ENCODE measurements at regions of chr13 and their contacts with region 1.

Region 1: DNA sequence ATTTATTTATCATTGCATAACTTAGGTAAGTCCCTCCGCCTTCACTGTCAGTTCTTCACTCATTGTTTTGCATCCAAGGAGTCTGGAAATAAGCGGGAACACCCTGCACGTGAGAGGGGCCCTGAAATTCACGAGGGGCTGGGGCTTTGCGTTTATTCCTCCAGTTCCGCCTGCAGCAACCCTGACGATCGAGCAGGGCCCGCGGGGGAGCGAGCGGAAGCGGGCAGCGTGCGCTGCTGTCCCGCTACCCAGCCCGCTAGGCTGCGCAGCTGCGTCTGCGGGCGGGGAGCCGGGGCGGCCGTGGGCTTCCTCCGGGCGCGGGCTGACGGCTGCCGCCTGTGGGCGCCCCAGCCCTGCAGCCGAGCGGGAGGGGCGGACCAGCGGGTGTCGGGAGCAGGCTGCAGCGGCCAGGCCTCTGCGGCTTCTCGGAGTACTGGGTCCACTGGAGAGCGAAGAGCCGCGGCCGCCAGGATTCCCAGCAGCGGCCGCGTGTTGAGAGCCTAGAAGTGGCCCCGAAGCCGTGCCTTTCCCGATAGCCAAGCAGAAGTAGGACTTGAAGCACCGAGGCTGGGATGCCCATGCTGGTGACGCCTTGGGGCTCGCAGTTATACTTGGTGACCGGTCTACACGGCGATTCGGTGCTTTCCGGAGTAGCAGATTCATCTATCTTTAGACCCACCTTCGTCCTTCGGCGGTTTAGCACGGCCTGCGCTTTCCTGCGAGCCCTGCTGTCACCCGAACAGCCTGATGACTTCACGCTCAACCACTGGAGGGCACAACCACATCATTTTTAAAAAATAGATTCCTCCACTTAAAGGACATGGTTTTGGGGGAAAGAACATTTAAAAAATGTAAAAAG is 32.9 kb upstream of the SACS start:
- DNase-seq: peak; percentile 42
- H3K4me3 ChIP-seq: peak overlapping the region; percentile 53
- H3K27ac ChIP-seq: peak overlapping the region; percentile 82
- H3K27me3 ChIP-seq: no peaks in the 10 kb centered on the region
- CTCF ChIP-seq: peak; percentile 63

Region 2: GRCh38 chr13:23488458-23488857 is 22.1 kb after region 1 on chr13:
- CTCF ChIA-PET with region 1: no interaction called
- POLR2A ChIA-PET with region 1: no interaction called
- DNase-seq: no peak
- H3K4me3 ChIP-seq: no peak overlapping the region
- H3K27ac ChIP-seq: no peak overlapping the region
- H3K27me3 ChIP-seq: no peaks in the 10 kb centered on the region
- CTCF ChIP-seq: no peak

Region 3: GRCh38 chr13:23630349-23631093 is 164.1 kb after region 1 on chr13:
- CTCF ChIA-PET with region 1: no interaction called
- POLR2A ChIA-PET with region 1: interaction called, 10 read pairs
- DNase-seq: no peak
- H3K4me3 ChIP-seq: no peak overlapping the region
- H3K27ac ChIP-seq: no peak overlapping the region
- H3K27me3 ChIP-seq: no peaks in the 10 kb centered on the region
- CTCF ChIP-seq: no peak

Region 4: GRCh38 chr13:23899555-23899954 is 433.2 kb after region 1 on chr13:
- CTCF ChIA-PET with region 1: interaction called, 15 read pairs
- POLR2A ChIA-PET with region 1: no interaction called
- DNase-seq: peak; percentile 61
- H3K4me3 ChIP-seq: no peak overlapping the region
- H3K27ac ChIP-seq: no peak overlapping the region
- H3K27me3 ChIP-seq: no peaks in the 10 kb centered on the region
- CTCF ChIP-seq: peak; percentile 62

Measured in AG04450 (cell line).